OCI-LY7 (cell line): ENCODE measurements at regions of chr5 and their contacts with region 1.

Region 1: DNA sequence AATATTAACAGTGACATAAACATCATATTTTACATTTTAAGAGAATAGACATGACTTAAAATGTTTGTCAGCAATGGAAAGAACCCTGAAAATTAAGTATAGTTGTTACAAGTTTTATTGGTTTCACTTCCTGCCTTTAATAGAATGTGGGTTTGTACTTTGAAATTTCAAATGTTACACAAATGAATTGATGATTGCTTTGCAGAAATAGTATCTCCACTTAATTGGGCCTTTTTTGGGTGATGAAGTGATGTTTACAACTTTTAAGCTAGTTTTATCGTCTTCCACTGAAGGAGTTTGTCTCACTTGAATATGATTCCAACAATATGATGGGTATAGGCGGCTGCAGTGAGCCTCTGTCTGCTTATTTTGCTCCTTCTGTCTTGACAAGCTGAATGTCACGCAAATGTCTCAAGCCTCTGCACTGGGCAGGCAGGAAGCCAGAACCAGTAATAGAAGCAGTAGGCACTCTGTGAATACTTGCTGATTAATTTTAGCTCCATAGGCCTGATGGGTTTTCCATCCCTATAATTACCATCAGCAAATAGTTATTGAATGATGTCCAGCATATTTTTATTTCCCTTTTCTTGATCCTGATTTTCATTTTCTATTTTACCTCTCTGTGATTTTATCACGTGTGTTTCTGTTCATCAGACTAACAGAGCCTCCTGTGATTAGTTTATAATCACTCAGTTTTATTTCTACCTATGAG is 10.6 kb upstream of the NR3C1 start:
- DNase-seq: peak; percentile 69
- H3K4me3 ChIP-seq: peak overlapping the region; percentile 55
- H3K27ac ChIP-seq: peak overlapping the region; percentile 68
- H3K4me1 ChIP-seq: peaks cover 74% of the 10 kb centered on the region
- CTCF ChIP-seq: peak; percentile 53

Region 2: GRCh38 chr5:143426437-143426991 is 12.4 kb after region 1 on chr5:
- CTCF ChIA-PET with region 1: no interaction called
- POLR2A ChIA-PET with region 1: interaction called, 119 read pairs
- intact Hi-C with region 1: no loop called
- DNase-seq: no peak
- H3K4me3 ChIP-seq: no peak overlapping the region
- H3K27ac ChIP-seq: no peak overlapping the region
- H3K4me1 ChIP-seq: peaks cover 27% of the 10 kb centered on the region
- CTCF ChIP-seq: no peak